ENCODE measurements at regions of chr7 and their contacts with region 1.

Region 1: GRCh38 chr7:73858807-73859206 is 2.2 kb upstream of the TMEM270 start:
- DNase-seq: no peak
- H3K4me3 ChIP-seq: no peak overlapping the region
- H3K27ac ChIP-seq: no peak overlapping the region
- H3K4me1 ChIP-seq: peaks cover 4% of the 10 kb centered on the region
- H3K27me3 ChIP-seq: no peaks in the 10 kb centered on the region
- CTCF ChIP-seq: no peak

Region 2: DNA sequence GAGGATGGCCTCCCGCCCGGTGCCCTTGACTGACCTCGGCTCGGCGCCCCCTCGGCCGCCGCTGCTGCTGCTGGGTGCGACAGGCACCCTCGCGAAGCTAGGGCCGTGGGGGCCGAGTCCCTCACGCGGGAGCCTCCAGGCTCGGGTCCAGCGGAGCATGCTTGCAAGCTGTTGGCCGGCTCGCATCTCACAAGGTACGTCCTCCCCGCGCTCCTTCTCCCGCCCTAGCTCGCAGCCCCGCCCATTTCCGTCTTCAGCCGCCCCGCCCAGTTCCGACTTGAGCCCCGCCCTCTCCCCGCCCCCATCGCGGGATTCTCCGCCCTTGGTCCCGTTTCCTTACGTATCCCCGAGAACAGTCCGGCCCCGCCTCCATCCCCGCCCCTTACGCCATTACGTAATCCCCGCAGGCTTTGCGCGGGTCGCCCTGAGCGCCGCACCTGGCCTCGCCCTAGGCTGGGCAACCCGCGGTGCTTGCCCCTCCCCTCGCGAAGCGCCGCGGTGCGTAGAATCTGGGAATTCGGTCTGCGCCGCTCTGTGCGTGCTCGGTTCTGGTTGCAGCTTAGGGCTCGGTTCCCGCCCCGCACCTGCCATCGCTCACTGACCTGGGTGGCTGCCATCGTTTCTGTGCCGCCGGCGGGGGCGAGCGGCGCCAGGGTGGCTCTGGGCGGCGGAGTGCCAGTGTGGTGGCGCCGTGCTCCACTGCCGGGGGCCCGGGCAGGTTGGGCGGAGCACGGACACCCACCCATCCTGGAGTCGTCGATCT is 120.0 kb before region 1 on chr7 and contains the start of gene ABHD11:
- CTCF ChIA-PET with region 1: no interaction called
- dilution Hi-C with region 1: no loop called
- in situ Hi-C with region 1: loop called in 1 of 2 experiments (anchors 5 kb)
- intact Hi-C with region 1: loop called (anchors 1 kb)
- DNase-seq: peak; percentile 96
- H3K4me3 ChIP-seq: peak within 1 kb of the TSS; percentile 59 to 84 (median 73)
- H3K27ac ChIP-seq: peak within 1 kb of the TSS; percentile 82
- H3K4me1 ChIP-seq: peaks cover 9% of the 10 kb centered on the region
- H3K27me3 ChIP-seq: no peaks in the 10 kb centered on the region
- CTCF ChIP-seq: no peak
- total RNA-seq, gene ABHD11: 6.7 to 23.6 TPM

Region 3: DNA sequence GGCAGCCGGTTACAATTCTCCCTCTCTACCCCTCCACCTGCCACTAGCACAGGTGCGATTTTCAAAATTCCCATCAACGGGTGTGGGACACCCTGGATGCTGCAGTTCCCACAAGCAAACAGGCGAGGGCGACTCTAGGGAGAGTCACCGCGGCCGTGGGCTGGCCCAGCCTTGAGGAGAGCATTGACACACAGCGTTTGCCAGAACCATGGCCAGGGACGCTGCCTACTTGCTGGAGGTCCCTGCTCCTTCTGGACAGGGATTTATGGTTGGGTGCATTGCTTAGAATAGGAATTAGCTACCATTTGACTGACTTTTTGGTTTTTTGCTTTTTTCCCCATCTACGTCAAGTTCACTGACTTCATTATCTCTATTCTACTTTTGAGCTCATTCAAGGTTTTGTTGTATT is 47.0 kb before region 1 on chr7:
- CTCF ChIA-PET with region 1: no interaction called
- dilution Hi-C with region 1: no loop called
- in situ Hi-C with region 1: loop called (anchors 5 to 10 kb)
- intact Hi-C with region 1: loop called (anchors 1 kb)
- DNase-seq: peak; percentile 68
- H3K4me3 ChIP-seq: no peak overlapping the region
- H3K27ac ChIP-seq: no peak overlapping the region
- H3K4me1 ChIP-seq: peaks cover 2% of the 10 kb centered on the region
- H3K27me3 ChIP-seq: no peaks in the 10 kb centered on the region
- CTCF ChIP-seq: peak; percentile 87 to 93

Region 4: DNA sequence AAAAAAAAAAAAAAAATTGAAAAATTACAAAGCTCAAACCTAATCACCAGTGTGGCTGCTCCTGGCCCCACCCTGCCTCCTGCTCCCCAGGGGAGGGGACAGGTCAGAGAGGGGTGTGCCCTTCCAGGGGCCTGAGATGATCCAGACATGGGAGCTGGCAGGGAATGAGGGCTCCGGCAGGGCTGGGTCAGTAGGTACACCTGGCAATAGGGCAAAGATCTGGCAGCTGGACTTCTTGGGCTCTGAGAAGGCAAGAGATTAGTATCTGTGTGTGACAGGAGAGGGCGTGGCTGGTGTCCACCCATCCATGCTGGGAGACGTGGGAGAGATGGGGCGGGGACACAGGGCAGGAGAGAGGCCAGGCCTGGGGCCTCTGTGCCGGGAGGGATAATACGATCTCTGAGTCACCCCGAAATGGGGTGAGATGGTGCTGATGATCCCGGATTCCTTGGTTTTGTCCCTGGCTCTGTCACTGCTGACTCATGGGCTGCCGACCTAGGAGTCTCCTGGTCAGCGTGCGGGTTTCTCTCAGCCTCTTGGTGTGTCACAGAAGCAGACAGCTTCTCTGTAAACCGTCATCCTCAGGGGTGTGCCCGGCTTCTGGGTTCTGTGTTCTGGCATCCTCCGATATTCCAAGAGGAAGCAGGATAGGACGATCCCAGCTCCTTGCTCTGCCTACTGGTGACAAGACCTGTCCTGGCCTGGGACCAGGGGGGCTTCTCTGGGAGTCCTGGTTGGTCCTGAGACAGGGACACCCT is 36.3 kb before region 1 on chr7:
- CTCF ChIA-PET with region 1: interaction called, 4 read pairs
- dilution Hi-C with region 1: loop called (anchors 5 kb)
- in situ Hi-C with region 1: no loop called
- intact Hi-C with region 1: no loop called
- DNase-seq: peak; percentile 100
- H3K4me3 ChIP-seq: no peak overlapping the region
- H3K27ac ChIP-seq: peak overlapping the region; percentile 90
- H3K4me1 ChIP-seq: peaks cover 19% of the 10 kb centered on the region
- H3K27me3 ChIP-seq: no peaks in the 10 kb centered on the region
- CTCF ChIP-seq: no peak